ENCODE measurements at regions of chr3 and their contacts with region 1.

Region 1: GRCh38 chr3:180601688-180602666 is at the start of gene TTC14:
- DNase-seq: peak; percentile 96
- H3K4me3 Mint-ChIP-seq: peak within 1 kb of the TSS; percentile 94
- H3K27ac Mint-ChIP-seq: peak within 1 kb of the TSS; percentile 91
- H3K4me1 Mint-ChIP-seq: peaks cover 15% of the 10 kb centered on the region
- H3K27me3 Mint-ChIP-seq: peaks cover 11% of the 10 kb centered on the region
- total RNA-seq, gene TTC14: 51.7 to 52.4 TPM

Region 2: DNA sequence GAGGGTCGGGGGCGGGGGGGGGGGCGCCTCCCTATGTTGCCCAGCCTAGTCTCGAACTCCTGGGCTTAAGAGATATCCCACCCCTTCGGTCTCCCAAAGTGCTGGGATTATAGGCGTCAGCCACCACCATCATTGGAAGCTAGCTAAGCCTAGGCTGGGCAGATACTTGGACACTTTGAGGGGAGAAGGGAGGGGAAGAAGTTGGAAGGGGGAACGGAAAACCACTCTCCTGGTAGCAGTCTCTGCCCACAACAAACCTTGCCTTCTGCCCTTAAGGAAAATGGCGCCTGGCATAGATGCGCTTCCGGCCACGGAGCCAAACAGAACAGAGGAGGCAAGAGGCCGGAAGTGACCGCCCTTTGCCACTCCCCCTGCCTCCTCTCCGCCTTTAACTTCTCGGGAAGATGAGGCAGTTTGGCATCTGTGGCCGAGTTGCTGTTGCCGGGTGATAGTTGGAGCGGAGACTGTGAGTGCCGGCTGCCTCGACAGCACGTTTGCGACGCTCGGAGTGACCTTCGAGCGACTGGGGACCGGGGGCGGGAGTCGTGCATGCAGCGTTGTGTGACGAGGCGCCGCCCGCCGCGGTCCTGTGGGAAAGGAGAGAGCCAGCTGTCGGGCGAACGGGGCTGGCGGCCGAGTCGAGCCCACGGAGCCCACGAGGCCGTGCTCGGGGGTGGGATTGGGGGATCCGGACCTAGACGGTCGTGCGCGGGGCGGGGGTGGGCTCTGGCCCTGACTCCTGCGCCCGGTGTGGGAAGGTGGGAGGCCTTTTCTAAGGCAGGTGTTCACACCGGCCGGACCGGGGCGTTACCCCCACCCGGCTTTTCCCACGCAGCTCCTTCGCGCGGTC is 1254.4 kb before region 1 on chr3 and contains the start of gene MFN1:
- CTCF ChIA-PET with region 1: no interaction called
- intact Hi-C with region 1: loop called (anchors 1 kb)
- DNase-seq: peak; percentile 94
- H3K4me3 Mint-ChIP-seq: peak within 1 kb of the TSS; percentile 91
- H3K27ac Mint-ChIP-seq: peak within 1 kb of the TSS; percentile 91
- H3K4me1 Mint-ChIP-seq: peaks cover 13% of the 10 kb centered on the region
- H3K27me3 Mint-ChIP-seq: no peaks in the 10 kb centered on the region
- total RNA-seq, gene MFN1: 23.0 to 23.1 TPM

Region 3: DNA sequence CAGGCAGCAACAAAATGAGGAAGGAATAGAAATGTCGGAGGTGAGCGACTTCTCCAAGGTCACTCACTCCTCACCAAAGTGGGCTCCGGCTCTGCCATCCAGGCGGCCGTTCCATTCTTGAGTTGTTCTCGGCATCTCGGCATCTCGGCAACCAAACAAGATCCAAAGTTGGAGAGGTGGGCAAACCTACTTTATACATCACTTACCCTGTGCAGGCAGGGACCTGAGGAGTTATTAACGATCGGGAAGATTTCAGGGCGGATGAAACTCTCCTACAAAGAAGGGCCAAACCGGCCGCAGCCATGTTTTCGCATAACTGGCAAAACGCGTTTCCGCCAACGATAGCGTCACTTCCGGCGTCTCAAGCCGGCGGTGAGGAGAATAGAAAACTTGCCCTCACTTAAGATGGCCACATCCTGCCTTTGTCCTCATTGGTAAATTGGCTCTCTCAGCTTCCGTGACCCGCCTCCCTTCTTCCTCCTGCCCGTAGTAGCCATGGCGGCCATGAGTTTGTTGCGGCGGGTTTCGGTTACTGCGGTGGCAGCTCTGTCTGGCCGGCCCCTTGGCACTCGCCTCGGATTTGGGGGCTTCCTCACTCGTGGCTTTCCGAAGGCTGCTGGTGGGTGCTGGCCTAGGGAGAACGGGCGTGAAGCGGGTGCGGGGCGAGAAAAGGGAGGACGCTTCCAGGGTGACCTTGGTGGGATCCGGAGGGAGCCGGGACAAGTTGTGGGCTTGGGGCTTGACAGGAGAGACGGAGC is 997.5 kb before region 1 on chr3 and contains the starts of genes MRPL47 and NDUFB5:
- CTCF ChIA-PET with region 1: no interaction called
- intact Hi-C with region 1: loop called (anchors 1 kb)
- DNase-seq: peak; percentile 96
- H3K4me3 Mint-ChIP-seq: peak within 1 kb of the TSS; percentile 100
- H3K27ac Mint-ChIP-seq: peak within 1 kb of the TSS; percentile 99
- H3K4me1 Mint-ChIP-seq: peaks cover 48% of the 10 kb centered on the region
- H3K27me3 Mint-ChIP-seq: no peaks in the 10 kb centered on the region
- total RNA-seq, gene MRPL47: 48.8 to 50.4 TPM
- total RNA-seq, gene NDUFB5: 148 to 151 TPM

Region 4: GRCh38 chr3:179811321-179812095 is 790.5 kb before region 1 on chr3:
- CTCF ChIA-PET with region 1: no interaction called
- intact Hi-C with region 1: loop called (anchors 10 kb)
- DNase-seq: peak; percentile 34
- H3K4me3 Mint-ChIP-seq: no peak overlapping the region
- H3K27ac Mint-ChIP-seq: no peak overlapping the region
- H3K4me1 Mint-ChIP-seq: no peaks in the 10 kb centered on the region
- H3K27me3 Mint-ChIP-seq: no peaks in the 10 kb centered on the region

Region 5: GRCh38 chr3:180633722-180634121 is 31.7 kb after region 1 on chr3:
- CTCF ChIA-PET with region 1: no interaction called
- intact Hi-C with region 1: loop called (anchors 1 kb)
- DNase-seq: no peak
- H3K4me3 Mint-ChIP-seq: no peak overlapping the region
- H3K27ac Mint-ChIP-seq: no peak overlapping the region
- H3K4me1 Mint-ChIP-seq: peaks cover 15% of the 10 kb centered on the region
- H3K27me3 Mint-ChIP-seq: peaks cover 41% of the 10 kb centered on the region

Region 6: GRCh38 chr3:180989291-180990163 is 387.6 kb after region 1 on chr3 and contains the start of gene DNAJC19:
- CTCF ChIA-PET with region 1: no interaction called
- intact Hi-C with region 1: loop called (anchors 5 kb)
- DNase-seq: peak; percentile 94
- H3K4me3 Mint-ChIP-seq: peak within 1 kb of the TSS; percentile 85
- H3K27ac Mint-ChIP-seq: peak within 1 kb of the TSS; percentile 87
- H3K4me1 Mint-ChIP-seq: peaks cover 26% of the 10 kb centered on the region
- H3K27me3 Mint-ChIP-seq: no peaks in the 10 kb centered on the region
- total RNA-seq, gene DNAJC19: 72.2 to 73.8 TPM